OCI-LY7 (cell line): ENCODE measurements at regions of chr10 and their contacts with region 1.

Region 1: DNA sequence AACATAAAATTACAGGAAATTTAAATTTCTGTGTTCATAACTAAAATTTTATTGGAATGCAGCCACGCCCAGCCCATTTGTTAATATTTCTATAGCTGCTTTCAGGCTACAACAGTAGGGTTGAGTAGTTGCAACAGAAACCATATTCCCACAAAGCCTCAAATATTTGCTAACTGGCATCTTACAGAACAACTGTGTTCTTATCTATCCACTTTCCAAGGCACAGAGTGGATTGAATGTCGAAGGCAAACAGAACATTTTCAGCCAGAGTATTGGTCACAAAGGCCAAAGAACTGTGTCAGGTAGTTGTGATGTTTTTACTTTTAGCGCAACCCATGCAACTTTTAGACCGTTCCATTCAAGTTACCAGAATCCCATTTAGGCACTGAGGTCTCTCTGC is 51.1 kb upstream of the OPN4 start:
- DNase-seq: no peak
- H3K4me3 ChIP-seq: no peak overlapping the region
- H3K27ac ChIP-seq: no peak overlapping the region
- H3K4me1 ChIP-seq: peaks cover 5% of the 10 kb centered on the region
- CTCF ChIP-seq: no peak

Region 2: GRCh38 chr10:86533328-86533727 is 69.9 kb before region 1 on chr10:
- CTCF ChIA-PET with region 1: no interaction called
- POLR2A ChIA-PET with region 1: interaction called, 10 read pairs
- intact Hi-C with region 1: no loop called
- DNase-seq: no peak
- H3K4me3 ChIP-seq: no peak overlapping the region
- H3K27ac ChIP-seq: no peak overlapping the region
- H3K4me1 ChIP-seq: no peaks in the 10 kb centered on the region
- CTCF ChIP-seq: no peak